GM12878 (cell line): ENCODE measurements at regions of chr6 and their contacts with region 1.

Region 1: GRCh38 chr6:57116776-57117175 is 26.8 kb downstream of the ZNF451 start:
- DNase-seq: no peak
- ATAC-seq: no peak
- H3K4me3 ChIP-seq: no peak overlapping the region
- H3K27ac ChIP-seq: no peak overlapping the region
- H3K4me1 ChIP-seq: no peaks in the 10 kb centered on the region
- H3K27me3 ChIP-seq: no peaks in the 10 kb centered on the region
- CTCF ChIP-seq: no peak
- EP300 ChIP-seq: no peak
- POLR2A ChIP-seq: no peak
- RAD21 ChIP-seq: no peak

Region 2: GRCh38 chr6:57089687-57090460 is 26.9 kb before region 1 on chr6 and contains the start of gene ZNF451:
- CTCF ChIA-PET with region 1: interaction called, 3 read pairs
- POLR2A ChIA-PET with region 1: no interaction called
- RAD21 ChIA-PET with region 1: no interaction called
- SMC1A ChIA-PET with region 1: interaction called, 17 read pairs
- in situ Hi-C with region 1: no loop called
- intact Hi-C with region 1: no loop called
- DNase-seq: peak; percentile 80
- ATAC-seq: peak; percentile 94
- H3K4me3 ChIP-seq: peak within 1 kb of the TSS; percentile 66
- H3K27ac ChIP-seq: peak within 1 kb of the TSS; percentile 71
- H3K4me1 ChIP-seq: peaks cover 8% of the 10 kb centered on the region
- H3K27me3 ChIP-seq: no peaks in the 10 kb centered on the region
- CTCF ChIP-seq: no peak
- EP300 ChIP-seq: no peak
- POLR2A ChIP-seq: peak; percentile 87
- RAD21 ChIP-seq: no peak
- polyA plus RNA-seq, gene ZNF451: 6.5 to 11.6 TPM

Region 3: GRCh38 chr6:57130661-57131177 is 13.9 kb after region 1 on chr6:
- CTCF ChIA-PET with region 1: interaction called, 3 read pairs
- POLR2A ChIA-PET with region 1: interaction called, 6 read pairs
- RAD21 ChIA-PET with region 1: interaction called, 5 read pairs
- SMC1A ChIA-PET with region 1: interaction called, 20 read pairs
- in situ Hi-C with region 1: no loop called
- intact Hi-C with region 1: no loop called
- DNase-seq: no peak
- ATAC-seq: no peak
- H3K4me3 ChIP-seq: no peak overlapping the region
- H3K27ac ChIP-seq: no peak overlapping the region
- H3K4me1 ChIP-seq: no peaks in the 10 kb centered on the region
- H3K27me3 ChIP-seq: no peaks in the 10 kb centered on the region
- CTCF ChIP-seq: no peak
- EP300 ChIP-seq: no peak
- POLR2A ChIP-seq: no peak
- RAD21 ChIP-seq: no peak